MCF 10A (cell line): ENCODE measurements at regions of chr11 and their contacts with region 1.

Region 1: DNA sequence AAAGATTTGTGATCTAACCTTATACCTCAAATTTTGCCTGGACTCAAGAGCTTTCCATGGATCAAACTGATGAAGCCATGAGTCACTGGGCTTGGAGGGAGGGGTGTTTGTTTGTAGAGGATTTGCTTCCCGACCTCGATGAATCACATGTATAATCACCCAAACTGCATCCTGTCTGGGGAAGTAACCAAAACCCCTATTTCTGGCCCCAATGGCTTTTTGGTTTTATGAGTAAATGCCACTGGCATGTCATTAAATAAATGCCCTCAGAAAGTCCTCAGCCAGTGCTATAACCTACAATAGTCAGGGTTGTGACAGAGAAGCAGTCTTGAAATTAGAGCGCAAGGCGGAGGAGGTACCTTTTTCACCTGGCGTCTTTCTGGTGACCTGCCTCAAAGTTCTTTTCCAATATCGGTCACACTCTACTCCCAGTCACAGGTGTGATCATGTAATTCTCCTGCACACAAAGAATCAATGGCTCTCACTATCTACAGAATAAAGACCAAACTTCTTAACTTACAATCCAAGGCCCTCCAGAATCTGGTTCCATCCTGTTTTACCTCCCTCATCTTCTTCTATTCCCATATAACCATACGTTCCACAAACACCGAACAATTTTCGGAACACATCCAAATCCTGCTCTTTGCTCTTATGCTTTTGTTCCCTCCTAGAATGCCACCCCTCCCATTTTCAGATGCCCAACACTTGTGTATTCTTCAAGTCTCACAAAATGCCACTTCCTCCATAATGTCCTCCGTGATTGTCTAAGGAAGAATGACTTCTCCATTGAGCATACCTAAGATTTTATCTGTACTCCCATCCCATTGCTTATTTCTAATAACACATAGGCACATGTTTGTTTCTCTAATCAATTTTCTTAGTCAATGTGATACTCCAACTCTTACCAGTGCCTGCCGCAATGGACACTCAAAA is 81.3 kb upstream of the BLID start:
- DNase-seq: peak; percentile 98
- H3K4me3 Mint-ChIP-seq: peak overlapping the region; percentile 12
- H3K27ac Mint-ChIP-seq: peak overlapping the region; percentile 49
- H3K4me1 Mint-ChIP-seq: peaks cover 46% of the 10 kb centered on the region
- H3K27me3 Mint-ChIP-seq: no peaks in the 10 kb centered on the region
- CTCF ChIP-seq: no peak

Region 2: GRCh38 chr11:122095681-122096262 is 101.5 kb before region 1 on chr11:
- CTCF ChIA-PET with region 1: interaction called, 54 read pairs
- POLR2A ChIA-PET with region 1: interaction called, 103 read pairs
- intact Hi-C with region 1: no loop called
- DNase-seq: no peak
- H3K4me3 Mint-ChIP-seq: no peak overlapping the region
- H3K27ac Mint-ChIP-seq: no peak overlapping the region
- H3K4me1 Mint-ChIP-seq: peaks cover 31% of the 10 kb centered on the region
- H3K27me3 Mint-ChIP-seq: no peaks in the 10 kb centered on the region
- CTCF ChIP-seq: no peak

Region 3: DNA sequence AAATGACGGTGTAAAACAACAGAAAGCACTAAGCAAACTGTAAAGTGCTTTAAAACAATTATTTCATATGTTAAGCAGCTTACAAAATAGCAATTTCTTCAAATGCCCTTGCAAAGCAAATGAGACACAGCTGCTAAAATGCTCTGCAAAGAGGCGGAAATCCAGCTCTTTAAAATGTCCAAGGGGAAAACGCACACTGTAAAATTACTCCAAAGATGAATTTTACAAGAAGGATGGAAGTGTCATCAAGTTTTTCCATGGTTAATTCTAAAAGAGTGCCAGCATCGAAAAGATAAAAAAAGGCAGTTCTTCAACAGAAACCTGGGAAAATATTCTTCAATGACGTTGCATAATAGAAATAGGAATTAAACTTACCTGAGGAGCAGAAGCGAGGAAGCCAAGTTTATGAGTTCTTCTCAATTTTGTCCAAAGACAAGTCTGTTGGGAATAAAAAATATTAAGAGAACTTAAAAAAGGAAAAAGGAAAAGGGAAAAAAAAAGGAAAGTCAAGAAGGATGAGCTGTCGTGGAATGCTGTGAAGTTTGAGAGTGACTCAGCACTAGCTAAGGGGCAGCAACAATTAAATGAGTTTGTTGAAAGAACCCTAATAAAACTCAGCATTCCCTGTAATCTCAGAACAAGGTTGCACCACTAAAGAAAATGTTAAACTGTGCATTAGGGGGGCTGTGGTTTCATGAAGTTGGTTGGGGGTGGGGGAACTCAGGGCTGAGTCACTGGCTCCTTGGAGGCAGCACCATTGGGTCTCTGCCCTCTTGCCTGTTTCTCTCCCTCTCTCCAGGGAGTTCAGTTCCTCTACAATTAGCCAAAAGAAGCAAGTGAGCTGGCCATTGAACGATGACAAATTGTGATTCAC is 17.1 kb before region 1 on chr11:
- CTCF ChIA-PET with region 1: interaction called, 4 read pairs
- POLR2A ChIA-PET with region 1: interaction called, 41 read pairs
- intact Hi-C with region 1: loop called (anchors 1 kb)
- DNase-seq: peak; percentile 95
- H3K4me3 Mint-ChIP-seq: peak overlapping the region; percentile 67
- H3K27ac Mint-ChIP-seq: peak overlapping the region; percentile 90
- H3K4me1 Mint-ChIP-seq: peaks cover 62% of the 10 kb centered on the region
- H3K27me3 Mint-ChIP-seq: no peaks in the 10 kb centered on the region
- CTCF ChIP-seq: no peak